ENCODE measurements at regions of chr1 and their contacts with region 1.

Region 1: GRCh38 chr1:24996983-24997893 is 67.2 kb upstream of the RUNX3 start:
- DNase-seq: peak; percentile 96
- ATAC-seq: peak; percentile 80
- H3K4me3 Mint-ChIP-seq: peak overlapping the region; percentile 66
- H3K27ac Mint-ChIP-seq: peak overlapping the region; percentile 96
- H3K4me1 Mint-ChIP-seq: peaks cover 92% of the 10 kb centered on the region
- H3K27me3 Mint-ChIP-seq: no peaks in the 10 kb centered on the region

Region 2: DNA sequence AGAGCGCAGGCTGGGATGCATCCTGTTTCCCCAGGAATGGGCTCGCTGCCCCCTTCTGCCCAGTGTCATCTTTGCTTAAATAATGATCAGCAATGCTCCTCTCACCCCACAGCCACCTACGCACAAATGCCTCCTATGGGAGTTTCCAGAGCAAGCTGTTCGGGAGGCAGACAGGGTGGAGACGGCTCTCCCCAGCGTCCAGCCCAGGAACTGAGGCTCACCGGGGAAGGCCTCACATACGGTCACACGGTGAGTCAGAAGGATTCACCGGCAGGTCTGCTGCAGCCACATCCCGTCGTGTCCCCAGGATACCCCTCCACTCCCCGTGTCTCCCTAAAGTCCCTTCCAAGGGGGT is 26.9 kb before region 1 on chr1:
- CTCF ChIA-PET with region 1: interaction called, 77 read pairs
- POLR2A ChIA-PET with region 1: interaction called, 106 read pairs
- DNase-seq: no peak
- ATAC-seq: no peak
- H3K4me3 Mint-ChIP-seq: peak overlapping the region; percentile 66
- H3K27ac Mint-ChIP-seq: peak overlapping the region; percentile 90
- H3K4me1 Mint-ChIP-seq: peaks cover 87% of the 10 kb centered on the region
- H3K27me3 Mint-ChIP-seq: no peaks in the 10 kb centered on the region

Region 3: DNA sequence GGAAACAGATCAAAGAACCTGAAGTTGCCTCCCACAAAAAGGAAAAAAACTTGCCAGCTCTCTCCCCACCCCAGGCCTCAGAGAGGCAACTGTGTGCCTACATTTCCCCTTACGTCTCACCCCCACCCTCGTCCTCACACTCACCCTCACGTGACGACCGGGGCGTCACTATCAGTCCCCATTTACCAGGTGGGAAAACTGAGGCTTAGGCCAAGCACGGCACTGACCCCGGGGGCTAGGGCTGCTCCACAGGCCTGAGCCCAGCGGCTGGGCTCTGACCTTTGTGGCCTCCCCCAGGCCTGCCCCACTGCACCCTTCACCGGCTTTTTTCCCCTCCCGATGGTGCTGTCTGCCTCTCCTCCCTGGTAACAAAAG is 15.6 kb before region 1 on chr1:
- CTCF ChIA-PET with region 1: interaction called, 10 read pairs
- POLR2A ChIA-PET with region 1: interaction called, 18 read pairs
- DNase-seq: peak; percentile 70
- ATAC-seq: peak; percentile 52
- H3K4me3 Mint-ChIP-seq: peak overlapping the region; percentile 63
- H3K27ac Mint-ChIP-seq: peak overlapping the region; percentile 93
- H3K4me1 Mint-ChIP-seq: peaks cover 93% of the 10 kb centered on the region
- H3K27me3 Mint-ChIP-seq: no peaks in the 10 kb centered on the region

Region 4: GRCh38 chr1:25031966-25032667 is 34.9 kb after region 1 on chr1:
- CTCF ChIA-PET with region 1: interaction called, 136 read pairs
- POLR2A ChIA-PET with region 1: interaction called, 12 read pairs
- DNase-seq: peak; percentile 82
- ATAC-seq: peak; percentile 32
- H3K4me3 Mint-ChIP-seq: peak overlapping the region; percentile 65
- H3K27ac Mint-ChIP-seq: no peak overlapping the region
- H3K4me1 Mint-ChIP-seq: peaks cover 39% of the 10 kb centered on the region
- H3K27me3 Mint-ChIP-seq: no peaks in the 10 kb centered on the region

Measured in activated CD8-positive, alpha-beta T cell treated with anti-CD3 and anti-CD28 coated beads, Interleukin-2, amount 10 ng/mL, durations not matched to agents 7 days and 5 days (primary cell).